ENCODE measurements at regions of chr19 and their contacts with region 1.

Region 1: GRCh38 chr19:18562086-18562485 is 4.4 kb downstream of the KXD1 start:
- DNase-seq: peak; percentile 89

Region 2: DNA sequence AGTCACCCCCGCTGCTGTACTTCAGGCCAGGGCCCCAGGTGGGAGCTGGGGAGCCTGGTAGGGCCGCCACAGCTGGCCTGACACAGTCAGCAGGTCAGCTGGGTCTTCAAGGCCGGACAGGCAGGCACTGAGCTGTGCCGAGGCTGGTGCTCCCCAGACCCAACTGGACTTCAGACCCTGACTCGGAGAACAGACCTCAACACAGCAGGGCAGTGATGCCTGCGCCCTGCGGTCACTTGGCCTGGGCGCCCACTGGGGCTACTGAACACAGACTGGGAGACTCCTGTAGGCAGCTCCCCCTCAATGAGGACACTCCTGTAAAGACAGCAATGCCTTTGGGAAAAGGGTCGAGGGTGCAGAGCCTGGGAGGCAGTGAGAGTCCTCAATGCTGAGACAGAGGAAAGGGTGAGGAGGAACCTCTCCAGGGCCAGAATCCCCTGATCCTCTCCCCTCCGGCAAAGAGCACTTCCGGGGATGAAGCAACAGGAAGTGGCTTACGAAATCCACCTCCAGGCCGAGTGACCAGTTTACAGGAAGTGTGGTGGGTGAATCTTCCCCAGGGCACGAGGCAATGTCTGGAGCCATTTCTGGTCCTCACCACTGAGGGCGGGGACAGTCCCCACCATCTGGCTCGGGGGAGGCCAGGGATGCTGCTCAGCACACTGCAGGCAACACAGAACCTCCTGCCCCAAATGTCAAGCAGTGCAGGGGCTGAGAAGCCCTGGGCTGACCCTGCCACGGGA is 83.3 kb before region 1 on chr19:
- intact Hi-C with region 1: loop called in 1 of 2 experiments (anchors 10 kb)
- DNase-seq: peak; percentile 95

Measured in posterior vena cava (tissue), 2 donors.